Activated naive CD4-positive, alpha-beta T cell treated with anti-CD3 and anti-CD28 coated beads for 36 hours (primary cell): ENCODE measurements at regions of chr6 and their contacts with region 1.

Region 1: GRCh38 chr6:10545482-10545881 is 24.3 kb downstream of the GCNT2 start:
- DNase-seq: no peak
- H3K4me3 Mint-ChIP-seq: no peak overlapping the region
- H3K27ac Mint-ChIP-seq: no peak overlapping the region
- H3K4me1 Mint-ChIP-seq: no peaks in the 10 kb centered on the region
- H3K27me3 Mint-ChIP-seq: no peaks in the 10 kb centered on the region

Region 2: GRCh38 chr6:9610620-9611415 is 934.7 kb before region 1 on chr6:
- CTCF ChIA-PET with region 1: no interaction called
- intact Hi-C with region 1: loop called (anchors 5 kb)
- DNase-seq: no peak
- H3K4me3 Mint-ChIP-seq: no peak overlapping the region
- H3K27ac Mint-ChIP-seq: no peak overlapping the region
- H3K4me1 Mint-ChIP-seq: no peaks in the 10 kb centered on the region
- H3K27me3 Mint-ChIP-seq: no peaks in the 10 kb centered on the region